Activated naive CD4-positive, alpha-beta T cell treated with anti-CD3 and anti-CD28 coated beads for 36 hours (primary cell): ENCODE measurements at regions of chr2 and their contacts with region 1.

Region 1: GRCh38 chr2:64144057-64145013 is at the start of gene PELI1:
- DNase-seq: peak; percentile 98
- H3K4me3 Mint-ChIP-seq: peak within 1 kb of the TSS; percentile 94
- H3K27ac Mint-ChIP-seq: peak within 1 kb of the TSS; percentile 94
- H3K4me1 Mint-ChIP-seq: peaks cover 31% of the 10 kb centered on the region
- H3K27me3 Mint-ChIP-seq: no peaks in the 10 kb centered on the region
- total RNA-seq, gene PELI1: 25.7 to 28.0 TPM

Region 2: DNA sequence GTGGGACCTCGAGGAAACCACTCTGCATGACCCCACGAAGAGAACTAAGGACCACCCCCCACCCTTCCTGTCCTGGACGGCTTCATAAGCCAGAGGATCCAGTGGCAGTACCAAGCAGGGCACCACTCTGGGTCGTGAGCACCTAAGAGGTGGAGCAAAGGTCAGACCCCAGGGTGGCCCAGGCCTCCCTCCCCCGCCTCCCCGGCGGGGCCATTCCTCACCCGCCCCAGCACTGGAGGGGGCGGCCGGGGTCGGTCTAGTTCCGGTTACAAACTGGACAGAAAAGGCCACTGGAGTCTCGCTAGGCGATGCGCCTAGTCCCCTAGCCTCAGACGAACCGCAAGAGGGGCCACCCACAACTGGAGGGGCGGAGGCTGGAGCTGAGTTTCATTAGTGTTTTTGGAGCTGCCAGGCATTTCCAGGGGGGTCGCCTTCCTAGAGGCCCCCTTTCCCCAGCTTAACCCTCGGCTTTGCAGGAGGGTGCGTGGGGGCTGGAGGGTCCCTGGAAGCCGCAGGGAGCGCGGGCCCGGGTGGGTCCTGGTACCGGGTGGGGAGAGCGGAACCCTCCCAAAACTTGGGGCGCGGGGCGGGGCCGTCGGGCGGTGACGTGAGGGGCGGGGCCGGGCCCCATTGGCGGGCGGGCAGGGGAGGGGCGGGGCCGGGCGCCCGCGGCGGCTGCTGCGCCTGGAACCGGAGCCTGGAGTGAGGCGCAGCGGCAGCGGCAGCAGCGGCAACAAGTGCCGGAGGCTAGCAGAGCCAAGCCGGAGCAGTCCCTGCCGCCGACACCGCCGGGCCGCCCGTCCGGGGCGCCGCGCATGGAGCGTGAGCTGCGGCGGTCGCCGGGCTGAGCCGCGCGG is 1948.7 kb before region 1 on chr2 and contains the start of gene B3GNT2:
- CTCF ChIA-PET with region 1: no interaction called
- intact Hi-C with region 1: loop called (anchors 10 kb)
- DNase-seq: peak; percentile 85
- H3K4me3 Mint-ChIP-seq: peak within 1 kb of the TSS; percentile 88
- H3K27ac Mint-ChIP-seq: peak within 1 kb of the TSS; percentile 91
- H3K4me1 Mint-ChIP-seq: peaks cover 22% of the 10 kb centered on the region
- H3K27me3 Mint-ChIP-seq: peaks cover 2% of the 10 kb centered on the region
- total RNA-seq, gene B3GNT2: 31.2 to 33.0 TPM

Region 3: DNA sequence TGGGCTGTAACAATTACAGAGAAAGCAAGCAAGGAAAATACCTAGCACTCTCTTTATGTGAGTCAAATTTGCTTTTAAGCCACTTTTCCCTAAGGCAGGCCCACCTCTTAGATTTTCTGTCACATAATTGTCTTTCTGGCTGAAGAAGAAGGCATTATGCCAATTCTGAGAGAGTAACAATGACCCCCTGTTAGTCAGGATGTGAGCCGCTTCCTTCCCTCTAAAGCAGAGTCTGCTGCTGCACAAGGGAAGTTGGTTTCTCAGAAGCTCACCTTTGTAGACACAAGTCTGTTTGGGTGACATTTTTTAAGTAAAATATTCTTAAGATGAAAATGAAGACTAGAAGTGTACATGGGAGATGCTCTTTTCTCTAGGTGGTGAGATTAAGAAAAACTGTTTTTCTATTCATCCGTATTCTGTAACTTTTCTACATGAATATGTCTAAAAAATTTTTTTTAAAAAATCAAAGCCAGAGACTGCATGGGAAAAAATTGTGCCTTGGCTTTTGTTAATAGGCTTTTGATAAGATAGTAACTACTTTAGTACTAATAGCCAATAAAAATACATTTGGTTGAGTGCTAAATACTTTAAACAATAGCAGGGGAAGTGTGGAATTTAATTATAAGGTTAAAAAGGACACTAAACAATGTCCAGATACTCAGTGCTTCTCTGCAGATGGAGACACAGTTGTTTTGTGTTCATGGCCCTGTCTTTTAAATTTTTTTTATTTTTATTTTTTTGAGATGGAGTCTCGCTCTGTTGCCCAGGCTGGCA is 91.7 kb before region 1 on chr2:
- CTCF ChIA-PET with region 1: interaction called, 3 read pairs
- intact Hi-C with region 1: loop called (anchors 1 kb)
- DNase-seq: peak; percentile 38
- H3K4me3 Mint-ChIP-seq: no peak overlapping the region
- H3K27ac Mint-ChIP-seq: peak overlapping the region; percentile 8
- H3K4me1 Mint-ChIP-seq: peaks cover 39% of the 10 kb centered on the region
- H3K27me3 Mint-ChIP-seq: no peaks in the 10 kb centered on the region

Region 4: GRCh38 chr2:64101141-64101591 is 43.2 kb before region 1 on chr2:
- CTCF ChIA-PET with region 1: no interaction called
- intact Hi-C with region 1: loop called (anchors 1 kb)
- DNase-seq: no peak
- H3K4me3 Mint-ChIP-seq: no peak overlapping the region
- H3K27ac Mint-ChIP-seq: peak overlapping the region; percentile 76
- H3K4me1 Mint-ChIP-seq: peaks cover 51% of the 10 kb centered on the region
- H3K27me3 Mint-ChIP-seq: no peaks in the 10 kb centered on the region

Region 5: DNA sequence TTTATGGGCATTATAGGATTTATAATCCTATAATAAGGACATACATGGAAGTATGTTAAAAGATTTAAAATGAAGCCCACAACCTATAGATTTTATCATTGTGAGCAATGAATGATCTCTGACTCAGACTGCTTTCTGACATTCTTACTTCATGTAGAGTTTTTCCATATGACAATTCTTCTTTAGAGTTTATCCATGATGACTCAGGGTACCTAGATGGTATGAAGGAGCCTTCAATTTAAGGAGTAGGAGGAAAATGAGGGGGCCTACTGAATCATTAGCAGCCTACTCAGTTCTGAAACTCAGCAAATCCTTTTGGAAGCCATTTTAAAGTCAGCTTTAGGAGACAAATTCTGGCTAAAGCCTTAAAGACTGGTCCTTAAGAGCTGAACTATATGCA is 10.5 kb before region 1 on chr2:
- CTCF ChIA-PET with region 1: interaction called, 4 read pairs
- intact Hi-C with region 1: loop called (anchors 1 kb)
- DNase-seq: no peak
- H3K4me3 Mint-ChIP-seq: no peak overlapping the region
- H3K27ac Mint-ChIP-seq: peak overlapping the region; percentile 72
- H3K4me1 Mint-ChIP-seq: peaks cover 88% of the 10 kb centered on the region
- H3K27me3 Mint-ChIP-seq: no peaks in the 10 kb centered on the region

Region 6: GRCh38 chr2:64312622-64313397 is 168.5 kb after region 1 on chr2:
- CTCF ChIA-PET with region 1: no interaction called
- intact Hi-C with region 1: no loop called
- DNase-seq: no peak
- H3K4me3 Mint-ChIP-seq: no peak overlapping the region
- H3K27ac Mint-ChIP-seq: no peak overlapping the region
- H3K4me1 Mint-ChIP-seq: peaks cover 4% of the 10 kb centered on the region
- H3K27me3 Mint-ChIP-seq: no peaks in the 10 kb centered on the region